RWPE1 (cell line): ENCODE measurements at regions of chr10 and their contacts with region 1.

Region 1: DNA sequence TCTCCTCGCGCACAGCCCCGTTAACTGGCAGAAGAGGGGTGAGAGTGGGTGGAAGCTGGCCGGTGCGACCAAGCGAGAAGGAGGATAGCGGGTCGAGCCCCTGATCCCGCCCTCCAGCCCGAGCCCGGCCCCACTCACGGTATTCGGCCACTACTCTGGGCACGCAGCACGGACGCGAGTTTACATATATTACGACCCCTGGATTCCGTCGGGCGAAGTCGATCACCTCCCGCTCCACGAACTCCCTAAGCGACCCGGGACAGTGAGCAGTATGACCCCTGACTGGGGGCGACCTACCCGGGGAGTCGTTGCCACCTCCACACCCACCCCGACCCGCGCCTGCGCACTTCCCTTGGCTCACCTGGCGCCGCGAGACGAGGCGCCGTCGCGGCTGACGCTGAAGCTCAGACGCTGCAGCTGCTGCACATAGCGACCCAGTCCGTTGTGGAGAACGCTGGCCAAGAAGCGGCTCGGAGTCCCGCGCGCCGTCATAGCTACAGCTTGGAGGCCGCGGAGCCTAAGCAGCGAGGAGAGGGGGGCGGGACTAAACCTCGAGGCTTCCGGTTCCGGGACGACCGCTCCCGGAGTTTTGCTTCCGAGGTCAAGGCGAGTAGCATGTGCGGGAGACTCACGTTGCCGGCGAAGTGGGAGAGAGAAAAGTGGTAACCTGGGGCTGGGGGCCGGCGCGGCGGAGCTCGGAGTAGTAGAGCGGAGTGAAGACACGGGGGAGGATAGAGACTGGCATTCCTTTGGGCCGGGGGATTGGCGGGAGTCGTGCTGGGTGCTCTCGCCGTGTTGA is at the starts of genes MRPL43 and TWNK:
- DNase-seq: peak; percentile 91
- H3K27ac ChIP-seq: peak within 1 kb of the TSS; percentile 88
- CTCF ChIP-seq: no peak

Region 2: GRCh38 chr10:100998991-100999741 is 12.0 kb after region 1 on chr10:
- CTCF ChIA-PET with region 1: interaction called, 20 read pairs
- POLR2A ChIA-PET with region 1: interaction called, 8 read pairs
- DNase-seq: peak; percentile 83
- H3K27ac ChIP-seq: peak overlapping the region; percentile 99
- CTCF ChIP-seq: peak; percentile 92